Activated T-helper 2 cell treated with anti-CD3 and anti-CD28 coated beads, Interferon-gamma antibody, Interleukin-2, Interleukin-4, amounts not matched to agents 10 μg/mL and 5 μg/mL and 100 μg/mL, durations not matched to agents 14 hours and 24 hours and 36 hours (primary cell): ENCODE measurements at regions of chr2 and their contacts with region 1.

Region 1: GRCh38 chr2:53786705-53787612 is at the starts of genes ASB3 and ERLEC1:
- DNase-seq: peak; percentile 87
- H3K4me3 Mint-ChIP-seq: peak within 1 kb of the TSS; percentile 99
- H3K27ac Mint-ChIP-seq: peak within 1 kb of the TSS; percentile 97
- H3K4me1 Mint-ChIP-seq: peaks cover 38% of the 10 kb centered on the region
- H3K27me3 Mint-ChIP-seq: no peaks in the 10 kb centered on the region
- total RNA-seq, gene ASB3: 24.3 and 26.4 TPM in 2 replicates
- total RNA-seq, gene ERLEC1: 36.0 and 36.2 TPM in 2 replicates

Region 2: GRCh38 chr2:53767405-53768241 is 19.3 kb before region 1 on chr2 and contains the start of gene CHAC2:
- intact Hi-C with region 1: loop called (anchors 1 kb)
- DNase-seq: peak; percentile 81
- H3K4me3 Mint-ChIP-seq: peak within 1 kb of the TSS; percentile 90
- H3K27ac Mint-ChIP-seq: peak within 1 kb of the TSS; percentile 95
- H3K4me1 Mint-ChIP-seq: peaks cover 26% of the 10 kb centered on the region
- H3K27me3 Mint-ChIP-seq: no peaks in the 10 kb centered on the region
- total RNA-seq, gene CHAC2: 22.4 and 25.3 TPM in 2 replicates

Region 3: DNA sequence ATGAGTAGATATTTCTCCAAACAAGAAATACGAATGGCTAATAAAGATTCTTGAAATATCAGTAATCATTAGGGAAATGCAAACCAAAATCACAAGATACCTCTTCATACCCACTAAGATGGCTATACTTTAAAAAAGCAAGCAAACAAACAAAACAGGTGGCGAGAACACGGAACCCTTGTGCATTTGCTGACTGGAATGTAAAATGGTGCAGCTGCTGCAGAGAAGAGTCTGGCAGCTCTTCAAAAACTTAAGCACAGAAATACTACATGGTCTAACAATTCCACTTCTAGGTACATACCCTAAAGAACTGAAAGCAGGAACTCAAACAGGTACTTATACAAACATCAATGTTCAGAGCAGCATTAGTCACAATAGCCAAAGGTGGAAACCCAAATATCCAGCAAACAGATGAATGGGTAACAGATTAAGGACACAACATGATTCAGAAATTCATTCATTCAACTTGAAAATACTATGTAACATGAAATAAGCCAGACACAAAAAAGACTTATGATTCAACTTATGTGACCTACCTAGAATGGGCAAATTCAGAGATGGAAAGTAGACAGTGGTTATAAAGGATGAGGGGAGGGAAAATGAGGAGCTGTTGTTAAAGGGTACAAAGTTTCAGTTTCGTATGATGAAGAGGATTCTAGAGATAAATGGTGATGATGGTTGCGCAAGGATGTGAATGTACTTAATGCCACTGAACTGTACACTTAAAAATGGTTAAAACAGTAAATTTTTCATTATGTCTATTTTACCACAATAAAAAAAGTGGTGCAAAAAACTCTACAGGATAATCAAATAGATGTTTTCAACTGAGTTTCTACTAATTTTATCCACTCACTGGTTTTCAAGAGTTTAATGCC is 99.7 kb after region 1 on chr2:
- intact Hi-C with region 1: loop called (anchors 2 kb)
- DNase-seq: no peak
- H3K4me3 Mint-ChIP-seq: no peak overlapping the region
- H3K27ac Mint-ChIP-seq: peak overlapping the region; percentile 47
- H3K4me1 Mint-ChIP-seq: peaks cover 43% of the 10 kb centered on the region
- H3K27me3 Mint-ChIP-seq: no peaks in the 10 kb centered on the region